K562 (cell line): ENCODE measurements at regions of chr12 and their contacts with region 1.

Region 1: GRCh38 chr12:49842519-49843352 is at the start of gene BCDIN3D:
- DNase-seq: peak; percentile 89 to 94 (median 90)
- ATAC-seq: peak; percentile 97
- H3K4me3 ChIP-seq: peak within 1 kb of the TSS; percentile 71
- H3K27ac ChIP-seq: peak within 1 kb of the TSS; percentile 82
- H3K4me1 ChIP-seq: peaks cover 16 to 17% of the 10 kb centered on the region in 2 experiments
- H3K27me3 ChIP-seq: no peaks in the 10 kb centered on the region
- CTCF ChIP-seq: no peak
- EP300 ChIP-seq: no peak
- POLR2A ChIP-seq: peak; percentile 94
- RAD21 ChIP-seq: no peak
- polyA plus RNA-seq, gene BCDIN3D: 6.3 to 6.9 TPM

Region 2: DNA sequence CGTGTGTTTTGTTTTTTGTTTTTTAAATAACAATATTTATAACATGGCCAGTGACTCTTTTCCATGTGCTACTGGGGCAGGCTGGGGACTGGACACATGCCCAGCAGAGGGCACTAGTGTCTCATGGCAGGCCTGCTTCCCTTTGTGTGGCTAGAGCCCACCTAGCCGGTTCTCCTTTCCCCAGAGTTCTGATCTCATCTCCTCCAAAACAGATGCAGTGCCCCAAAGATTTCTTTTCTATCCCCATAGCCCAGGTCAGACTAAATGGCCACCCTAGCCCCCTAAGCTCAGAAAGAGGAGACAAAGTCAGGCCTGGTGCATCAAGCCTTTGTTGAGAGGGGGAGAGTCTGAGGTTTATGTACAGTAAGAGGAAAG is 198.1 kb before region 1 on chr12:
- CTCF ChIA-PET with region 1: interaction called, 3 read pairs
- POLR2A ChIA-PET with region 1: interaction called, 4 read pairs
- in situ Hi-C with region 1: loop called (anchors 5 kb)
- intact Hi-C with region 1: loop called (anchors 5 kb)
- DNase-seq: peak; percentile 83 to 91 (median 87)
- ATAC-seq: peak; percentile 95
- H3K4me3 ChIP-seq: no peak overlapping the region
- H3K27ac ChIP-seq: 0 out of 3 replicates have a peak overlapping the region, but pooled peaks have one; percentile 25
- H3K4me1 ChIP-seq: peaks cover 0 to 16% of the 10 kb centered on the region in 2 experiments; a peak in 3 of 5 replicates
- H3K27me3 ChIP-seq: no peaks in the 10 kb centered on the region
- CTCF ChIP-seq: peak; percentile 95 to 96 (median 96)
- EP300 ChIP-seq: no peak
- POLR2A ChIP-seq: no peak
- RAD21 ChIP-seq: peak; percentile 99

Region 3: GRCh38 chr12:49763006-49763591 is 79.6 kb before region 1 on chr12:
- CTCF ChIA-PET with region 1: interaction called, 26 read pairs
- POLR2A ChIA-PET with region 1: interaction called, 3 read pairs
- in situ Hi-C with region 1: no loop called
- intact Hi-C with region 1: no loop called
- DNase-seq: peak; percentile 68 to 76 (median 71)
- ATAC-seq: peak; percentile 77
- H3K4me3 ChIP-seq: no peak overlapping the region
- H3K27ac ChIP-seq: no peak overlapping the region
- H3K4me1 ChIP-seq: no peaks in the 10 kb centered on the region
- H3K27me3 ChIP-seq: no peaks in the 10 kb centered on the region
- CTCF ChIP-seq: peak; percentile 65 to 82 (median 74)
- EP300 ChIP-seq: no peak
- POLR2A ChIP-seq: no peak
- RAD21 ChIP-seq: 0 out of 4 replicates have a peak, but pooled peaks of 1 of the 2 experiments have one; percentile 7

Region 4: GRCh38 chr12:49828133-49829091 is 14.3 kb before region 1 on chr12 and contains the start of gene NCKAP5L:
- CTCF ChIA-PET with region 1: no interaction called
- POLR2A ChIA-PET with region 1: interaction called, 14 read pairs
- in situ Hi-C with region 1: no loop called
- intact Hi-C with region 1: no loop called
- DNase-seq: peak; percentile 97 to 99 (median 99)
- ATAC-seq: peak; percentile 97
- H3K4me3 ChIP-seq: peak within 1 kb of the TSS; percentile 85
- H3K27ac ChIP-seq: peak within 1 kb of the TSS; percentile 64
- H3K4me1 ChIP-seq: peaks cover 29 to 35% of the 10 kb centered on the region in 2 experiments
- H3K27me3 ChIP-seq: no peaks in the 10 kb centered on the region
- CTCF ChIP-seq: no peak
- EP300 ChIP-seq: no peak; the same call in 1 of the 2 replicates
- POLR2A ChIP-seq: peak; percentile 86
- RAD21 ChIP-seq: no peak
- polyA plus RNA-seq, gene NCKAP5L: 0.01 to 0.04 TPM

Region 5: GRCh38 chr12:49920241-49920921 is 77.6 kb after region 1 on chr12:
- CTCF ChIA-PET with region 1: no interaction called
- POLR2A ChIA-PET with region 1: no interaction called
- in situ Hi-C with region 1: no loop called
- intact Hi-C with region 1: no loop called
- DNase-seq: no peak
- ATAC-seq: peak; percentile 53; the same call in 2 of the 3 replicates
- H3K4me3 ChIP-seq: no peak overlapping the region
- H3K27ac ChIP-seq: no peak overlapping the region
- H3K4me1 ChIP-seq: no peaks in the 10 kb centered on the region
- H3K27me3 ChIP-seq: peaks cover 5 to 43% of the 10 kb centered on the region in 2 experiments
- CTCF ChIP-seq: no peak
- EP300 ChIP-seq: no peak
- POLR2A ChIP-seq: no peak
- RAD21 ChIP-seq: no peak